Activated CD4-positive, alpha-beta T cell treated with anti-CD3 and anti-CD28 coated beads for 36 hours (primary cell): ENCODE measurements at regions of chr17 and their contacts with region 1.

Region 1: GRCh38 chr17:59892924-59893676 is at the starts of genes RPS6KB1 and TUBD1:
- DNase-seq: peak; percentile 98
- ATAC-seq: peak; percentile 97
- H3K4me3 Mint-ChIP-seq: peak within 1 kb of the TSS; percentile 99
- H3K27ac Mint-ChIP-seq: peak within 1 kb of the TSS; percentile 97
- H3K4me1 Mint-ChIP-seq: peaks cover 45% of the 10 kb centered on the region
- H3K27me3 Mint-ChIP-seq: no peaks in the 10 kb centered on the region
- total RNA-seq, gene RPS6KB1: 52.6 to 54.5 TPM
- total RNA-seq, gene TUBD1: 10.6 to 11.0 TPM

Region 2: GRCh38 chr17:59565171-59565969 is 327.7 kb before region 1 on chr17 and contains the start of gene DHX40:
- CTCF ChIA-PET with region 1: no interaction called
- POLR2A ChIA-PET with region 1: no interaction called
- intact Hi-C with region 1: loop called in 1 of 2 experiments (anchors 5 kb)
- DNase-seq: peak; percentile 98
- ATAC-seq: peak; percentile 89
- H3K4me3 Mint-ChIP-seq: peak within 1 kb of the TSS; percentile 99
- H3K27ac Mint-ChIP-seq: peak within 1 kb of the TSS; percentile 99
- H3K4me1 Mint-ChIP-seq: peaks cover 20% of the 10 kb centered on the region
- H3K27me3 Mint-ChIP-seq: no peaks in the 10 kb centered on the region
- total RNA-seq, gene DHX40: 22.9 to 24.1 TPM

Region 3: DNA sequence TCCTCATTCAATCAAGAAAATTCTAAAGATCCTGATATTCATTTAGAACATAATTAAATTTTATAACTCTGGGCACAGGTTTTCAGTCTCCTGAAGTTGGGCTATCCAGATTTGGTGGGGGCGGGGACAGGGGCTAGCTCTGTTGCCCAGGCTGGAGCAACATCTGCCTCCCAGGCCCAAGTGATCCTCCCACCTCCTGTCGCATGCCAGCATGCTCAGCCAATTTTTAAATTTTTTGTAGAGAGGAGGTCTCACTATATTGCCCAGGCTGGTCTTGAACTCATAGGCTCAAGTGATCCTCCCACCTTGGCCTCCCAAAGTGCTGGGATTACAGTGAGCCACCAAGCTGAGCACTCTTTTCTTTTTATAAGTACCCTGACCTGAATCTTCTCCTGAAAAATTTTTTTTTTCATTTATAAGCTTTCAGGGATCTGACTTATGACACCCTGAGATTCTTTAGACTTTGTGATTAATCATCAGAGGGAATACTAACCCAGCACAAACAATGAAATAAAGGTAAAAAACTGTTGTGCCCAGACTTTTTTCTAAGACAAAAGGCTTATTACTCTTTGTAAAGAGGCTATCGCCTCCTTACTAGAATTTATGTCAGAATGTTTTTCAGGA is 63.0 kb before region 1 on chr17:
- CTCF ChIA-PET with region 1: no interaction called
- POLR2A ChIA-PET with region 1: no interaction called
- intact Hi-C with region 1: no loop called
- DNase-seq: peak; percentile 61
- ATAC-seq: peak; percentile 4
- H3K4me3 Mint-ChIP-seq: peak overlapping the region; percentile 78
- H3K27ac Mint-ChIP-seq: peak overlapping the region; percentile 93
- H3K4me1 Mint-ChIP-seq: peaks cover 88% of the 10 kb centered on the region
- H3K27me3 Mint-ChIP-seq: no peaks in the 10 kb centered on the region

Region 4: DNA sequence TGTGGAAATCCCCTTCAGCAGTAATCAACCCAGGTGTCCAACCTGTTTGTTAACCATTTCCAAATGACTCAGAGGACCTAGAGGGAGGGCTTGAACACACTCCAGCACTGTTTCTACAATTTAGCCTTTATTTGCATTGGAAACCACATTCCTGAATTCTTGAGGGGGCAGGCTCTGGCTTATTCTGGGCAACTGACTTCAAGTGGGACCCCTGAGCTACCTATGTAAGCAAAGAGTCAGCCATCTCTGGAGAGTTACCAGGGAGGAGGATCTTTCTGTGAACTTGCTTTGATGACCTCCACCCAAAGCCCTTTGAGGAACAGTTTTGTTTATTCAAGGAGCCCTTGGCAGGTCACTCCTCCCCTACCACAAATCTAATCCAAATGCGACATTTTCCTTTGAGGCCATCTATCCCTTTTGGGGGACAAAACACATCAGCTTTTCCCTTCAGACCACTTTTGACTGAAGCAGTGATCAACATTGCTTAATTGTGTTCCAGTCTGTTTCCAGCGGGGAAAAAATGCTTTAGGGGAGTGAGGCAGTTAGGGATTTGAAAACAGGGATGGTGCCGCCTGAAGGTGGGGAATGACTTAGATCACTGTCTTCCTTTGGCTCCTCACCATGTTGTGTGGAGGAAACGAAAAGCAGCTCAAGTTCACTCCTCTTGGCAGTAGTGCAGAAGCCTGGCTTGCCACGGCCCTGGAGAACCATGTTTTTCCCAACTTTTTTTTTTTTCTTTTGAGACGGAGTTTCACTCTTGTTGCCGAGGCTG is 46.5 kb before region 1 on chr17:
- CTCF ChIA-PET with region 1: interaction called, 3 read pairs
- POLR2A ChIA-PET with region 1: interaction called, 5 read pairs
- intact Hi-C with region 1: loop called (anchors 2 to 5 kb)
- DNase-seq: no peak
- ATAC-seq: peak; percentile 21
- H3K4me3 Mint-ChIP-seq: peak overlapping the region; percentile 46
- H3K27ac Mint-ChIP-seq: peak overlapping the region; percentile 87
- H3K4me1 Mint-ChIP-seq: peaks cover 73% of the 10 kb centered on the region
- H3K27me3 Mint-ChIP-seq: no peaks in the 10 kb centered on the region

Region 5: DNA sequence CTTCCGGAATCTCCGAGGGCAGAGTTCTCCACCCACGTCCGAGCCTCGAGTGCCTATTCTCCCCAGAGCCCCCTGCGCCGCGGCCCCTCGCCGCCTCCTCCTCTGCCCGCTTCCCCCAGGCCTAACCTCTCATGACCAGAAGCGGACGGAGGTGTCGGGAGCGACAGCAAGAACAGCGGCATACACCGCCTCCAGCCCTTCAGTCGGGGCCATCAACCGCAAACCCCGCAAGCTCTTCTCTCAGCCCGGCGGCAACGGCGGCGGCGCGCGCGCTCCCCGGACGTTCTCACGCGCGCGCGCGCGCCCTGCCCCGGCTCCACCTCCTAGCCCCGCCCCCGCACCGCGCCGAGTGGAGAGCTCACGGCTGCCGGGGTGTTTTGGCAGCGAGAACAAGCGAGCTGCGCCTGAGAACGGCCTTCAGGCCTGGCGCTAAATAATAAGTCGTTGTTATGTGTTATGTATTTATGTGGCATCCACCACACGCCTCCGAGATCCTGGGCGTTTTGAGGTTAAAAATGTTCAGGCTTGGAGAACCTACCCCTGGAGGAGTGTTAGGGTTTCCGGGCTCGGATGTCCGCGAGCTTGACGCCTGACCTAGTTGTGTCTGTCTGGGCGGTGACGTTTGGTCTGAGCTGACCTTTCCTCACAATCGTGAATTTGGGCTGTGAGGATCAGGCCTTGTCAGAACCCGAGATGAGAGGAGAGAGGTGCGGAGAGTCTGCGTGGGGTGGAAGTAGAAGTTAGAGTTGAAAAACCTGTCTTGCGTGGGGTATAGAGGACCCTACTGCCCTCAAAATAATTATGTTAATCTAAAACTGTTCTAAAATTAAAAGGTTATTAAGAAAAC is 71.6 kb after region 1 on chr17 and contains the start of gene RNFT1:
- CTCF ChIA-PET with region 1: no interaction called
- POLR2A ChIA-PET with region 1: interaction called, 4 read pairs
- intact Hi-C with region 1: loop called in 1 of 2 experiments (anchors 1 kb)
- DNase-seq: peak; percentile 97
- ATAC-seq: peak; percentile 84
- H3K4me3 Mint-ChIP-seq: peak within 1 kb of the TSS; percentile 78
- H3K27ac Mint-ChIP-seq: peak within 1 kb of the TSS; percentile 96
- H3K4me1 Mint-ChIP-seq: peaks cover 19% of the 10 kb centered on the region
- H3K27me3 Mint-ChIP-seq: no peaks in the 10 kb centered on the region
- total RNA-seq, gene RNFT1: 32.8 to 36.9 TPM

Region 6: DNA sequence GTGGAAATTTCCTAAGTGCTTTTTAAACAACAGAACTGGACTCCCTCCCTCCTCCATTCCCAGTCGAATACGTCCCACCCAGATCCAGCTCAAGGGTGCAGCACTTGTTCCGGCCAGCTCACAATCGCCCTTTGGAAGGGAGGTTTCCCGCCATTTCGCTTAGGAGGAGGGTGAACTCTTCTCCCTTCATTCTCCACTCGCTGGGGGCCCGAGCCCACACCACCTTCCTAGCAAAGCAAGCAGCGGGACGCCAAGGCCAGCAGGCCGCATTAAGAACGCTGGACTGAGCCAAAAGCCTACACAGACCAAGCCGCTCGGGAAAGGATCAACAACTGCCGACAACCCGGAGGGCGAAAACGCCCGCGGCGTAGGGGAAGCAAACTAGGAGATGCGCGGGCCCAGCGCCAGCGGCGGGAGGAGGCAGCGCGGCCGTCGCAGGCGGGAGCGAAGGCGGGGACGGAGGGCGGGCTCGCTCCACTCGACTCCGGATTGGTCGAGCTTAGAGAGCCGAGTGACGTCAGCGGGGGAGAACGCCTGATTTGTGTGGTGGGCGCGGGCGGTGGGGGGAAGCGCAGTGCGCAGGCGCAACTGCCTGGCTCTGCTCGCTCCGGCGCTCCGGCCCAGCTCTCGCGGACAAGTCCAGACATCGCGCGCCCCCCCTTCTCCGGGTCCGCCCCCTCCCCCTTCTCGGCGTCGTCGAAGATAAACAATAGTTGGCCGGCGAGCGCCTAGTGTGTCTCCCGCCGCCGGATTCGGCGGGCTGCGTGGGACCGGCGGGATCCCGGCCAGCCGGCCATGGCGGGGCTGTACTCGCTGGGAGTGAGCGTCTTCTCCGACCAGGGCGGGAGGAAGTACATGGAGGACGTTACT is 706.8 kb after region 1 on chr17 and contains the start of gene PPM1D:
- CTCF ChIA-PET with region 1: no interaction called
- POLR2A ChIA-PET with region 1: no interaction called
- intact Hi-C with region 1: loop called in 1 of 2 experiments (anchors 5 kb)
- DNase-seq: peak; percentile 99
- ATAC-seq: peak; percentile 94
- H3K4me3 Mint-ChIP-seq: peak within 1 kb of the TSS; percentile 95
- H3K27ac Mint-ChIP-seq: peak within 1 kb of the TSS; percentile 97
- H3K4me1 Mint-ChIP-seq: peaks cover 31% of the 10 kb centered on the region
- H3K27me3 Mint-ChIP-seq: no peaks in the 10 kb centered on the region
- total RNA-seq, gene PPM1D: 9.3 to 9.7 TPM